Heart right ventricle (tissue), 16 donors: ENCODE measurements at regions of chrX and their contacts with region 1.

Region 1: GRCh38 chrX:119693040-119693995 is at the start of gene SEPTIN6:
- DNase-seq: peak; percentile 66 to 67
- ATAC-seq: peak; percentile 81 to 91 (median 85)
- H3K4me3 ChIP-seq: peak within 1 kb of the TSS; percentile 53 to 83 (median 74)
- H3K27ac ChIP-seq: peak within 1 kb of the TSS; percentile 40 to 88 (median 74)
- H3K4me1 ChIP-seq: peaks cover 0 to 26% (median 0%) of the 10 kb centered on the region in 9 donors
- H3K27me3 ChIP-seq: no peaks in the 10 kb centered on the region
- CTCF ChIP-seq: peak in 1 of 9 donors; percentile 7
- total RNA-seq, gene SEPTIN6: 7.5 to 24.9 (median 9.3) TPM

Region 2: DNA sequence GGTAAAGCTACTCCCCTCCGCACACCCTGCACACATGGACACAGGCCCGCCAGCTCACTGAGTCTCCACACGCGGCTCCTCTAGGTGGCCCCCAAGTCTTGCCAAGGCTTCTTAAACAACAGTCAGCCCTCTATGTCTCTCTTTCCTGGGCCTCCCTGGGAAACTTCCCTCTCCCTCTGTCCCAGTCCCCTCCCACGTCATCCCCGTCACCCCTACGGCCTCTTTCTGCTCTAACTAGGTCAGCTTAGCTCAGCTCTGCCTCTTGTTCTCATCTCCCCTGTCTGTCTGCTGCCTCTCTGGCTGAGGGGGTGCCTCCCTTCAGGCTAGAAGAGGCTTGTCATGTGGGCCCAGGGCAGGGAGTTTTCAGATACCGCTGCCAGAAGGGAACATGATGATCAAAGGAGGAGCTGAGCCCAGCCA is 39.2 kb before region 1 on chrX:
- intact Hi-C with region 1: loop called in 1 of 10 experiments (anchors 5 kb)
- DNase-seq: peak; percentile 33 to 73
- ATAC-seq: peak; percentile 83 to 96 (median 90)
- H3K4me3 ChIP-seq: no peak overlapping the region
- H3K27ac ChIP-seq: peak overlapping the region in 8 of 10 donors; percentile 11 to 72 (median 51)
- H3K4me1 ChIP-seq: peaks cover 0 to 10% (median 0%) of the 10 kb centered on the region in 9 donors
- H3K27me3 ChIP-seq: no peaks in the 10 kb centered on the region
- CTCF ChIP-seq: peak in 5 of 9 donors; percentile 10 to 47 (median 33)

Region 3: DNA sequence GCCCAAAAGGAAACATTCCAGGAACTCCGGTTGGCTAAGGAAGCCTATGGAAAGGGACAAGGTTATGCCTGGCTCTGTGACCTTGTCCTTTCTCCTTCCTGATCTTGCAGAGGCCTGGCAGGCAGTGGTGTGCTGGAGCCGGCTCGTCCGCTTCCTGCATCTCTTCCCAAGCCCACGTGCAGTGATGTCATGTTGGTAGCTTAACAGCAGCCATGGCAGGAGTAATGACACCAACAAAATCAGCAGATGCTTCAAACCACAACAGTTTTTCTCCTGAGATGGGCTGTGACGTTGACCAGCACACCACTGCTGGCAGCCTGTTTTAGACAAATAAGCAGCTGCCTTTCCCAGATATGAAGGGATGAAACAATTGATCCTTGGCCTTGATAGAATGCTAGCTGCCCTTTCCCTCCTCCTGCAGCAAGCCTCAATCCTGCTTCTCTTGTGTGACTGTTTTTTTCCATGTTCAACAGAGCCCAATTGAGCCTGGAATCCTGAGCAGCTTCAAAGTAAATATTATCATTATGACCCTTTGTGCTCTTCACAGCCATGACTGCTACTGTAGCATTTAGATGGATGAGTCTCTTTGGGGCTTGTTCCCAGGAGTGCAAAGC is 23.8 kb before region 1 on chrX:
- intact Hi-C with region 1: no loop called
- DNase-seq: peak in 1 of 2 donors; percentile 42
- ATAC-seq: peak; percentile 30 to 76 (median 71)
- H3K4me3 ChIP-seq: no peak overlapping the region
- H3K27ac ChIP-seq: peak overlapping the region in 7 of 10 donors; percentile 6 to 59 (median 35)
- H3K4me1 ChIP-seq: peaks cover 0 to 38% (median 21%) of the 10 kb centered on the region in 9 donors
- H3K27me3 ChIP-seq: no peaks in the 10 kb centered on the region
- CTCF ChIP-seq: no peak